ENCODE measurements at regions of chr5 and their contacts with region 1.

Region 1: GRCh38 chr5:148374692-148375360 is 8.9 kb upstream of the FBXO38 start:
- DNase-seq: peak; percentile 72
- ATAC-seq: peak; percentile 100
- H3K4me3 ChIP-seq: no peak overlapping the region
- H3K27ac ChIP-seq: no peak overlapping the region
- H3K4me1 ChIP-seq: no peaks in the 10 kb centered on the region
- H3K27me3 ChIP-seq: no peaks in the 10 kb centered on the region
- CTCF ChIP-seq: peak; percentile 89
- EP300 ChIP-seq: no peak
- POLR2A ChIP-seq: no peak
- RAD21 ChIP-seq: peak; percentile 75

Region 2: GRCh38 chr5:148290271-148291195 is 84.3 kb before region 1 on chr5:
- CTCF ChIA-PET with region 1: interaction called, 8 read pairs
- POLR2A ChIA-PET with region 1: no interaction called
- in situ Hi-C with region 1: no loop called
- intact Hi-C with region 1: loop called (anchors 1 kb)
- DNase-seq: peak; percentile 21
- ATAC-seq: peak; percentile 74
- H3K4me3 ChIP-seq: no peak overlapping the region
- H3K27ac ChIP-seq: no peak overlapping the region
- H3K4me1 ChIP-seq: no peaks in the 10 kb centered on the region
- H3K27me3 ChIP-seq: no peaks in the 10 kb centered on the region
- CTCF ChIP-seq: peak; percentile 58
- EP300 ChIP-seq: no peak
- POLR2A ChIP-seq: no peak
- RAD21 ChIP-seq: 0 out of 2 replicates have a peak, but pooled peaks have one; percentile 17